Activated naive CD4-positive, alpha-beta T cell treated with anti-CD3 and anti-CD28 coated beads, Interleukin-2, amount 10 ng/mL, durations not matched to agents 7 days and 5 days (primary cell): ENCODE measurements at regions of chr7 and their contacts with region 1.

Region 1: DNA sequence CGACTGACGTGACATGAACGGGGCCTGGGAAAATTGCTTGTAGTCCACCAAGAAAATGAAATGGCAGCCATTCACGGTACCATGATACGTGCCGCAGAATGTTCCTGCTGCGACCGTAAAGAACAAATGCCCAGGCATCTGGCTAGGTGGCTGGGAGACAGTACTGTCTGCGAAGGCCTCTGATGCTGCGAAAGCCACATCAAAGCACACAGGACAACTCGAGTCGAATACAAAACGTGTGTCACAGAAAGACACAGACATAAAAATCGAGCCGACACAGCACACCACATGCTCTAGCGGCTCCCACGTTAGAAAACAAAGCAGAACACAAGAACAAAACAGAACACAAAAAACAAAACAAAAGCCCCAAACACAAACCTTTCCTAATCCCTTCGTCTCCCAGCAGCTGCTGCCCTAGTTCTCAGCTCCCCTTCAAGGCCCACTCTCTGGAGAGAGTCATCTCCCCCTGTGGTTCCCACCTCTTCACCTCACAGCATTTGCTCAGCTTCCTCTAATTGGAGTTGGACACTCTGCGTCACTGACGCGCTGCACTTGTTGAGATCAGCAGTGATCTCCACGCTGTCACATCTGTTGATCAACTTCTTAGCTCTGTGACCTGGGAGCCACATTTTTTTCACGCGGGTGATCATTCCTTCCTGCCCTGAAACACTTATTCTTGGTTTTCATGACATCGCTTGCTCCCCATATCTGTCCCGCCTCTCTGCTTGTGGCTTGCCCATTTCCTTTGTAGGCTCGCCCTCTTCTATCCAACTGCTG is 112.2 kb downstream of the CLEC2L start:
- DNase-seq: peak; percentile 74
- H3K4me3 Mint-ChIP-seq: peak overlapping the region; percentile 57
- H3K27ac Mint-ChIP-seq: peak overlapping the region; percentile 91
- H3K4me1 Mint-ChIP-seq: peaks cover 47% of the 10 kb centered on the region
- H3K27me3 Mint-ChIP-seq: no peaks in the 10 kb centered on the region

Region 2: GRCh38 chr7:139645572-139646523 is 10.1 kb after region 1 on chr7:
- CTCF ChIA-PET with region 1: interaction called, 23 read pairs
- DNase-seq: peak; percentile 89
- H3K4me3 Mint-ChIP-seq: no peak overlapping the region
- H3K27ac Mint-ChIP-seq: no peak overlapping the region
- H3K4me1 Mint-ChIP-seq: peaks cover 75% of the 10 kb centered on the region
- H3K27me3 Mint-ChIP-seq: no peaks in the 10 kb centered on the region